ENCODE measurements at regions of chr19 and their contacts with region 1.

Region 1: GRCh38 chr19:55301459-55302317 is 17.9 kb downstream of the BRSK1 start:
- DNase-seq: peak; percentile 97
- ATAC-seq: peak; percentile 91
- H3K4me3 Mint-ChIP-seq: peak overlapping the region; percentile 75
- H3K27ac Mint-ChIP-seq: peak overlapping the region; percentile 89
- H3K4me1 Mint-ChIP-seq: peaks cover 8% of the 10 kb centered on the region
- H3K27me3 Mint-ChIP-seq: no peaks in the 10 kb centered on the region
- CTCF ChIP-seq: peak; percentile 98

Region 2: DNA sequence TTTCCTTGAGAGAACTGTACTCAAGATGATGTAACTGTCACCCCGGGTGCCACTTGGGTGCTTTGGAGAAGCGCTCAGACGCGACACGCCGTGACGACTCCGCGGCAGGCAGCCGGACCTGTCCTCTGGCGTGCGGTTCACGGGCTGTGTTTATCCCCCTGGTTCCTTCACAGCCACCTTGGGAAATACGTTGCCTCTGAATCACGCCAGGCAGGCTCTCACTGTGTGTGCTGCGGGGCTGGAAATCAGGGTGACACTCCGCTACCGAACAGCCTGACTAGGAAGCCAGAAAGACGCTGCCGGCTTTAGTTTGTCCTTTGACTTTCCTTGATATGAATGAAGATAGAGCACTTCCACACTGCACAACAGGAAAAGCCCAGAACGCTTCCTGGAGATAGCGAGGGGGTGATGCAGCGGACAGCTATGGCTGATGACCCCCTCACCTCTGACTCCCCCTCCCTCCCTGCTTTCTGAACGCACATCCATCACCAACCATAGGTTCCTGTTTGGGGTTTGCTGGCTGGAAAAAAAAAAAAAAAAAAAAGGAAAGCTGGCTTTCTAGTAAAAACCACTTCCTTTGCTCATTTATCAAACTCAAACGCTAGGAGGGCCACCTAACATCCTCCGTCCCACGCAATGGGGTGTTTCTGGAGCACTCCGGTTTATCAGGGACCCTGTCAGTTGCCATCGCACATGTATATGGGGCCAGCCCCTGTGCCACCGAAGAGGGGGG is 259.9 kb before region 1 on chr19:
- CTCF ChIA-PET with region 1: no interaction called
- POLR2A ChIA-PET with region 1: no interaction called
- intact Hi-C with region 1: no loop called
- DNase-seq: peak; percentile 87
- ATAC-seq: peak; percentile 92
- H3K4me3 Mint-ChIP-seq: peak overlapping the region; percentile 60
- H3K27ac Mint-ChIP-seq: peak overlapping the region; percentile 88
- H3K4me1 Mint-ChIP-seq: peaks cover 30% of the 10 kb centered on the region
- H3K27me3 Mint-ChIP-seq: no peaks in the 10 kb centered on the region
- CTCF ChIP-seq: no peak

Region 3: DNA sequence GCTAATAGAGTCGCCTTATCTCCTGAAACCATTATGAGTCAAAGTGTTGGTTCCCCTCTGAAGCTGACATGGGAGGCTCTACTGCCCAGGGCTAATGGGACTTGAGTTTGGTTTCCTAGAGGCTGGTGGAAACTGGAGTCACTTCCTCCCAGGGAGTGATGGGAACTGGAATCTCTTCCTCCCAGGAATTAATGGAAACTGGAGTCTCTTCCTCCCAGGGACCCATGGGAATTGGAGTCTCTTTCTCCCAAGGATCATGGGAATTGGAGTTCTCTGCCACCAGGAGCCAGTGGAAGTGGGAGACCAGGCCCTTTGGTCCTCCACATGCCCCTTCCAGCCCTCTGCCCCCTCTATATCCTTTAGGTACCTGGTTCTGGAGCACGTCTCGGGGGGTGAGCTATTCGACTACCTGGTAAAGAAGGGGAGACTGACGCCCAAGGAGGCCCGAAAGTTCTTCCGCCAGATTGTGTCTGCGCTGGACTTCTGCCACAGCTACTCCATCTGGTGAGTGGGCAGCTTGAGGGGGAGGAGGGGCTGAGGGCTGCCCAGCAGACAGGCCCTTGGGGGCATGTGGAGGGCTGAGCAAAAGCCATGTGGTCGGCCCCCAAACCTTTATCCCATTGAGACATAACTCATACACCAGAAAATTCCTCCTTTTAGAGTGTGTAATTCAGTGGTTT is 12.4 kb before region 1 on chr19:
- CTCF ChIA-PET with region 1: interaction called, 46 read pairs
- POLR2A ChIA-PET with region 1: interaction called, 8 read pairs
- intact Hi-C with region 1: no loop called
- DNase-seq: no peak
- ATAC-seq: no peak
- H3K4me3 Mint-ChIP-seq: no peak overlapping the region
- H3K27ac Mint-ChIP-seq: no peak overlapping the region
- H3K4me1 Mint-ChIP-seq: no peaks in the 10 kb centered on the region
- H3K27me3 Mint-ChIP-seq: no peaks in the 10 kb centered on the region
- CTCF ChIP-seq: no peak

Region 4: GRCh38 chr19:55316646-55317045 is 15.0 kb after region 1 on chr19:
- CTCF ChIA-PET with region 1: interaction called, 10 read pairs
- POLR2A ChIA-PET with region 1: interaction called, 4 read pairs
- intact Hi-C with region 1: no loop called
- DNase-seq: no peak
- ATAC-seq: no peak
- H3K4me3 Mint-ChIP-seq: no peak overlapping the region
- H3K27ac Mint-ChIP-seq: no peak overlapping the region
- H3K4me1 Mint-ChIP-seq: no peaks in the 10 kb centered on the region
- H3K27me3 Mint-ChIP-seq: no peaks in the 10 kb centered on the region
- CTCF ChIP-seq: no peak

Region 5: GRCh38 chr19:55339048-55339888 is 37.6 kb after region 1 on chr19 and contains the start of gene KMT5C:
- CTCF ChIA-PET with region 1: interaction called, 25 read pairs
- POLR2A ChIA-PET with region 1: interaction called, 15 read pairs
- intact Hi-C with region 1: no loop called
- DNase-seq: peak; percentile 100
- ATAC-seq: peak; percentile 84
- H3K4me3 Mint-ChIP-seq: peak within 1 kb of the TSS; percentile 90
- H3K27ac Mint-ChIP-seq: peak within 1 kb of the TSS; percentile 98
- H3K4me1 Mint-ChIP-seq: peaks cover 12% of the 10 kb centered on the region
- H3K27me3 Mint-ChIP-seq: peaks cover 4% of the 10 kb centered on the region
- CTCF ChIP-seq: no peak
- total RNA-seq, gene KMT5C: 32.6 to 33.1 TPM